WTC11 (cell line): ENCODE measurements at regions of chr1 and their contacts with region 1.

Region 1: DNA sequence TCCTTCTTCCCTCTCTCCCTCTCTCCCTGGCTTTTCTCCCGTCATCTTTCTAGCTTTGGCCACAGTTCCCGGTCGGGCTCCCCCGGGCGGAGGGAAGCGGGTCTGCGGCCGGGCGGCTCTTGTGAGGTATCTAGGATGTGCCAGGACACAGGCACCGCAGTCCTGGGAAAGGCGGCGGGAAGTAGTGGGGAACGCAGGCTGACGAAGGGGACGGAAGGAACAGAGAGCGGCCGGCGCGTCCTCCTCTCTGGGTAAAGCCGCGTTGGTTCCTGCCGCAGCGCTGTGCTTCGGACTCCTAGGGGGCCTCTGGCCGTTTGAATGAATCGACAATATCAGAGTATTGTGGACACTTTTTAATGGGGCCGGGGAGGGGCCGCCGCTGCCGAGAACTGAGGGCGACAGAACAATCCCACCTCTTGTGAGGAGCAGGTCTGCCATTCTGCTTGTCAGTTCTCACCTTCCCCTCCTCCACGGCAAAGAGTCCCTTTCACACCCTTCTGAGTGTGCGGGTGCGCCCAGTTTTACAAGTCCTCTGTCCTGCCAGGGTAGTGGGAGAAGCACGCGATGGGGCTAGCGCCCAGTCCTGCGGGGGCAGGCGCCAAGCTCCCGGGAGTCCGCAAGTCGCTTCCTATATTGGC is 1.2 kb upstream of the LHX9 start:
- DNase-seq: peak; percentile 90
- ATAC-seq: peak; percentile 42
- H3K4me3 Mint-ChIP-seq: peak overlapping the region; percentile 82
- H3K27ac Mint-ChIP-seq: no peak overlapping the region
- H3K4me1 Mint-ChIP-seq: peaks cover 96% of the 10 kb centered on the region
- H3K27me3 Mint-ChIP-seq: peaks cover 100% of the 10 kb centered on the region
- CTCF ChIP-seq: peak; percentile 49; the same call in 1 of the 2 replicates

Region 2: DNA sequence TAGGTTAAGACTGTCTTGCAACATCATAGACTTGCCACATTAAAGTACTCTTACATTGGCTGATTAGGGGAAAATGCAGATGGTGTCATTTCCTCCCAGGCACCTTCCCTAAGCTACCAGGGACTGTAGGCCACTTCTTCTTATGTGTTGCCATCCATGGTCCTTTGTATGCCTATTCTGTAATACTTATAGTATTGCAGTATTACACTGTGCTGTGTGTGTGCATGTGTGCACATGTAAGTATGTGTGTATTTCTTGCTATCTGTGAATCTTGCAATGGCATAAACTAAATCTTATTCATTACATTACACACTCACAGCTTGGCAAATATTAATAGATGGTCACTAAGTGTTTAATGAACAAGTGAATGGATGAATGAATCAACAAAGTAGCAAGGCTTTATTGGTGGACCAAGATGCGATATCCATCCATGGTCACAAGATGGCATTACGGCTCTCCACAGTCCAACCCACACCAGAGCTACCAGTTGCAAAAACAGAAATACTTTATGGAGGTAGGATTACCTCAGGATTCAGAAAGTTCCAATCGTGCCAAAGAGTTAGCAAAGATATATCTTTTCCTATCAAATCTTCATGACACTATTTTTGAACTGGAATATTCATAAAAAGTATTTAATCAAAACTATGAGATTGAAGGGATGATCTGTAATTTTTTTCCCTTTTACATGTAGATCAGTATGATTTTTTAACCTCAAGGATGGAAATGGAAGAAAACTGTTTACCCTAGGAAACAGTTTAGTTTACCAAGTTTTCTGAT is 300.9 kb before region 1 on chr1:
- CTCF ChIA-PET with region 1: interaction called, 11 read pairs
- POLR2A ChIA-PET with region 1: no interaction called
- DNase-seq: peak; percentile 39
- ATAC-seq: peak; percentile 97
- H3K4me3 Mint-ChIP-seq: no peak overlapping the region
- H3K27ac Mint-ChIP-seq: no peak overlapping the region
- H3K4me1 Mint-ChIP-seq: peaks cover 9% of the 10 kb centered on the region
- H3K27me3 Mint-ChIP-seq: no peaks in the 10 kb centered on the region
- CTCF ChIP-seq: peak; percentile 44

Region 3: DNA sequence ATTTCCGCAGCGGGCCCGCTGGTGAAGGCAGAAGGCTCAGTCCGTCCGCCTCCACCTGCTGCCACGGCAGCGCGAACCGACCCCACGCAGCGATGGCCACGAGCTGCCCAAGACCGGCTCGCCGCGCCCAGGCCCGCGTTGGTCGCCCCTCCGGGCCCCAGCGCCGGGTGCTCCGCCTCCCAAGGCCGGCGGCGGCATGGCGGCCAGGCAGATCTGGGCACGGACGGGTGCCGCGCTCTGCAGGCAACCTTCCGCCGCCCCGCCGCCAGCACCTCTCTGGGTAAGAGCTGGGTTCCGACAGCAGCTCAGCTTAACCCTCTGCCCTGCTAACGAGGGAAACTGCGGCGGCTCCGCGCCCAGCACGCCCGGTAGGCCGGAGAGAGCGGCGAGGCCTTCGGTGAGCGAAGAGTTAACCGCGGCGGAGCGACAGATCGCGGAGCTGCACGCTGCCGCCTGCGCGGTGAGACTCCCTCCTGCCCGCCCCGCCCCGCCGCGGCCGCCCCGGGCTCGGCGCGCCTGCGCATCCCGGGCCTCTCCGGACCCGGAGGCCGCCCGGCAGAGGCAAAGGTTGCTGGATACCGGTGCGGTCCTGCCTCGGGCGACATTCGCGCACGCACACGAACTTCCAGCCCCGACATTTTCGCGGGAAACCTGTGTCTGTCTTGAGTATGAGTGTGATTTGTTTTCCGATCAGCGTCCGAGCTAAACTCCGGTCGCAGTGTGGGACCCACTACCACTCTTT is 13.4 kb before region 1 on chr1 and contains the start of gene C1orf53:
- CTCF ChIA-PET with region 1: interaction called, 11 read pairs
- POLR2A ChIA-PET with region 1: interaction called, 6 read pairs
- DNase-seq: peak; percentile 85
- ATAC-seq: peak; percentile 94
- H3K4me3 Mint-ChIP-seq: peak within 1 kb of the TSS; percentile 77
- H3K27ac Mint-ChIP-seq: no peak within 1 kb of the TSS
- H3K4me1 Mint-ChIP-seq: peaks cover 32% of the 10 kb centered on the region
- H3K27me3 Mint-ChIP-seq: peaks cover 93% of the 10 kb centered on the region
- CTCF ChIP-seq: no peak
- total RNA-seq, gene C1orf53: 0.33 to 0.89 TPM (median 0.73 TPM) in 3 replicates